AG04449 (cell line): ENCODE measurements at regions of chr3 and their contacts with region 1.

Region 1: GRCh38 chr3:113745273-113746068 is 578 bp downstream of the NAA50 start:
- DNase-seq: peak; percentile 68
- H3K4me3 ChIP-seq: peak overlapping the region; percentile 90
- CTCF ChIP-seq: peak; percentile 73

Region 2: DNA sequence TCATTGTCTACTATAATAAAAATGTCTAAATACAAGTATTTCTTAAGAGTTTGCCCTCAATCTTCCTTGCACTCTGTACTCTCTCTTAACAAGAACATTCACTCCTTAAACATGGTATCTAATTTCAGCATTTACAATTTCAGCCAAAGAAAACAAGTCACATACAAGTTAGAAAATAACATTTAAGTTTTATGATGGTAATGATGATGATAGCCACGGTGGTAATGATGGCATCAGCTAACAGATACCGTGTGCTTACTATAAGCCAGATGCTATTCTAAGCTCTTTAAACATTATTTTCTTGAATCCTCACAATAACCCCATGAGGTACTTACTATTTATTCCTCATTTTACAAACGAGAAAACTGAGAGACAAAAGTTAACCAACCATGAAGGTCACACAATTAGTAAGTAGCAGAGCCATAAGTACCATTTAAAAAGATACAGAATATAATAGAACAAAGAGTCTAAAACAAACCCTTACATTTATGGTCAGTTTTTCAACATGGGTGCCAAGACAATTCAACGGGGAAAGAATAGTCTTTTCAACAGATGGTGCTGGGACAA is 237.9 kb before region 1 on chr3:
- CTCF ChIA-PET with region 1: no interaction called
- POLR2A ChIA-PET with region 1: no interaction called
- DNase-seq: no peak
- H3K4me3 ChIP-seq: no peak overlapping the region
- CTCF ChIP-seq: no peak

Region 3: DNA sequence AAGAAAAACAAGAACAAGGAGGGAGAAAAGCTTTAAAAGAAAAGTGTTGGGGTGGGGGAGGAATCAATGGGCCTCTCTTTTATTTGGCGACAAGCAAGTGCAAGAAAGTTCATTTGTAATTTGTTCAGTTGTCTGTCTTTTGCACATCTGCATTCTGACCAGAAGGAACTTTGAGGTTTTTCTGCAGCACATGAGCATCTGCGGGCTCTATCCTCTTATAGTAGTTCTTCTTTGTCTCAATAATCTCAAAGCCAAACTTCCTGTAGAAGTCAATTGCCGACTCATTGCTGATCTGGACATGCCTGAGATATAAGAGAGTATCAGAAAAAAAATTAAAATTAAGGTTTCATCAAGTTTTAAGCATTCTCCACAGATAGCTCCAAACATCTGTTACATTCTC is 23.8 kb before region 1 on chr3:
- CTCF ChIA-PET with region 1: interaction called, 11 read pairs
- POLR2A ChIA-PET with region 1: no interaction called
- DNase-seq: no peak
- H3K4me3 ChIP-seq: no peak overlapping the region
- CTCF ChIP-seq: no peak

Region 4: GRCh38 chr3:113730550-113730949 is 14.9 kb before region 1 on chr3:
- CTCF ChIA-PET with region 1: interaction called, 54 read pairs
- POLR2A ChIA-PET with region 1: no interaction called
- DNase-seq: no peak
- H3K4me3 ChIP-seq: no peak overlapping the region
- CTCF ChIP-seq: no peak

Region 5: DNA sequence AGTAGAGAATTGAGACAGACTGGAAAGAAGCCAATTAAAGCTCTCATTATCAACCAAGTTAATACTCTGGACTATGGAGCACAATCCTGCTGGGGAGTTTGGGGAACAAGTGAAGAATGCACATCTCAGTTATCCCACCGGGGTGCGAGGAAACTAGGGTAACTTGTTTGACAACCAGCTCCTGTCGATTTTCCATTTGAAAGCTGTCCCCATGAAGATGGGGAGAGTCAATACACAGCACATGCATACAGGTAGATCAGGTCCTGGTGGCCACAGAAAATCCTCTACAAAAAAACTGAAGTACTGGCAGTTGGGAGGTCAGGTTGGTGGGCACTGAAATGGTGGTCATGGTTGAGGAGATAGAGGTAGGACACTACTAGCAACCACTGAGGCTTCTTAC is 67.4 kb after region 1 on chr3:
- CTCF ChIA-PET with region 1: no interaction called
- POLR2A ChIA-PET with region 1: no interaction called
- DNase-seq: no peak
- H3K4me3 ChIP-seq: no peak overlapping the region
- CTCF ChIP-seq: no peak

Region 6: DNA sequence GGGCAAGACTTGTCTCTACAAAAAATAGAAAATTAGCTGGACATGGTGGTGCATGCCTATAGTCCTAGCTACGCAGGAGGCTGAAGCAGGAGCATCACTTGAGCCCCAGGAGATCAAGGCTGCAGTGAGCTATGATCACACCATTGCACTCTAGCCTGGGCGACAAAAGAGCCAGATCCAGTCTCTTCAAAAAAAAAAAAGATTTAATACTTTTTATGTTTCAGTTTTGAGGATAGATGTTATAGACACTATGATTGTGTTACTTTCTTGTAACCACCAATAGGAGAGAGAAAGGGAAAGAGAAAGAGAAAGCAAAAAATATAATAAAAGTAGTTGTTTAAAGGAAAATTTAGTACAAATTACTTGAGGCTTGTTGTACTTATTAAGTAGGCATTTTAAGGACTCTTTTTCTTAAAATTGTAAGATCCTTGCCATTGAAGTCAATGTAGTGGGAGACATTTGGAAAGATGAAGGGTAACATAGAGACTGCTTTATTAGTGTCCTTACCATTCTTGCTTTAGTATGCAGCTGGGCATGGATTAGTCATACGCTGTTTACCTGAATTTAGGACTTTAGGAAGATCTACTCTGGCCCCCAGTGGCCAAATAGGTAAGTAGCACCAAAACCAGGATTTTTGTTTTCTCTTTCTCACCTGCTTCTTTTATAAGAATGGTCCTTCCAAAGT is 167.2 kb after region 1 on chr3:
- CTCF ChIA-PET with region 1: interaction called, 11 read pairs
- POLR2A ChIA-PET with region 1: no interaction called
- DNase-seq: no peak
- H3K4me3 ChIP-seq: no peak overlapping the region
- CTCF ChIP-seq: peak; percentile 51